ENCODE measurements at regions of chr6 and their contacts with region 1.

Region 1: GRCh38 chr6:5214570-5215052 is 46.1 kb downstream of the LYRM4 start:
- DNase-seq: peak; percentile 21
- H3K4me3 ChIP-seq: no peak overlapping the region
- H3K27ac ChIP-seq: no peak overlapping the region
- H3K4me1 ChIP-seq: peaks cover 6% of the 10 kb centered on the region
- H3K27me3 ChIP-seq: no peaks in the 10 kb centered on the region
- CTCF ChIP-seq: peak; percentile 59 to 72

Region 2: GRCh38 chr6:4637691-4638433 is 576.7 kb before region 1 on chr6:
- CTCF ChIA-PET with region 1: no interaction called
- dilution Hi-C with region 1: no loop called
- in situ Hi-C with region 1: no loop called
- intact Hi-C with region 1: no loop called
- DNase-seq: peak; percentile 84
- H3K4me3 ChIP-seq: no peak overlapping the region
- H3K27ac ChIP-seq: no peak overlapping the region
- H3K4me1 ChIP-seq: peaks cover 20% of the 10 kb centered on the region
- H3K27me3 ChIP-seq: no peaks in the 10 kb centered on the region
- CTCF ChIP-seq: no peak

Region 3: GRCh38 chr6:5053038-5053437 is 161.6 kb before region 1 on chr6:
- CTCF ChIA-PET with region 1: no interaction called
- dilution Hi-C with region 1: no loop called
- in situ Hi-C with region 1: no loop called
- intact Hi-C with region 1: no loop called
- DNase-seq: no peak
- H3K4me3 ChIP-seq: no peak overlapping the region
- H3K27ac ChIP-seq: no peak overlapping the region
- H3K4me1 ChIP-seq: no peaks in the 10 kb centered on the region
- H3K27me3 ChIP-seq: no peaks in the 10 kb centered on the region
- CTCF ChIP-seq: no peak

Region 4: DNA sequence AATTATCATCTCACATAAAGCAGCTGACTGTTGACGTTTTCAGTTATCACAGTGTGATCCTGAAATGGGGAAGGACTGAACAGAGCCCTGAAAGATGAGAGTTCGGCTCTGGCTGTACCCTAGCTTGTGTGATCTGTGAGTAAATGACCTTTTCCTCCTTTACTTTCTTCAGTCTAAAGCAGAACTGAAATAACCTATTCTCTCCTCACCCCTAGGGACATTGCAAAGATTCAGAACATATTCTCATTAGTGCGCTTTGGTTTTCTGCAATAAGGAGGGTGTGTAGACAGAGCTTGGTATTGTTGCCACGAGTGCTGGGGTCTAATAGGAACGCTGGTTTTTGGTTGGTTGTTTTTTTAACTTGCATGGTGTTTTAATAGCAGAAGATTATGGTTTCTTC is 63.4 kb after region 1 on chr6:
- CTCF ChIA-PET with region 1: no interaction called
- dilution Hi-C with region 1: no loop called
- in situ Hi-C with region 1: no loop called
- intact Hi-C with region 1: loop called (anchors 2 kb)
- DNase-seq: no peak
- H3K4me3 ChIP-seq: no peak overlapping the region
- H3K27ac ChIP-seq: no peak overlapping the region
- H3K4me1 ChIP-seq: peaks cover 16% of the 10 kb centered on the region
- H3K27me3 ChIP-seq: no peaks in the 10 kb centered on the region
- CTCF ChIP-seq: no peak

Region 5: GRCh38 chr6:5379647-5380242 is 165.1 kb after region 1 on chr6:
- CTCF ChIA-PET with region 1: no interaction called
- dilution Hi-C with region 1: no loop called
- in situ Hi-C with region 1: loop called in 1 of 2 experiments (anchors 25 kb)
- intact Hi-C with region 1: loop called (anchors 1 kb)
- DNase-seq: no peak
- H3K4me3 ChIP-seq: no peak overlapping the region
- H3K27ac ChIP-seq: no peak overlapping the region
- H3K4me1 ChIP-seq: no peaks in the 10 kb centered on the region
- H3K27me3 ChIP-seq: no peaks in the 10 kb centered on the region
- CTCF ChIP-seq: peak; percentile 62 to 77

Region 6: GRCh38 chr6:5398530-5398929 is 183.9 kb after region 1 on chr6:
- CTCF ChIA-PET with region 1: interaction called, 3 read pairs
- dilution Hi-C with region 1: no loop called
- in situ Hi-C with region 1: loop called in 1 of 2 experiments (anchors 25 kb)
- intact Hi-C with region 1: loop called (anchors 1 kb)
- DNase-seq: peak; percentile 56
- H3K4me3 ChIP-seq: no peak overlapping the region
- H3K27ac ChIP-seq: no peak overlapping the region
- H3K4me1 ChIP-seq: peaks cover 11% of the 10 kb centered on the region
- H3K27me3 ChIP-seq: no peaks in the 10 kb centered on the region
- CTCF ChIP-seq: peak; percentile 60 to 65